ENCODE measurements at regions of chr13 and their contacts with region 1.

Region 1: GRCh38 chr13:47774671-47774994 is 226.4 kb downstream of the SUCLA2 start:
- DNase-seq: no peak
- ATAC-seq: no peak
- H3K4me3 ChIP-seq: no peak overlapping the region
- H3K4me3 Mint-ChIP-seq: no peak overlapping the region
- H3K27ac ChIP-seq: no peak overlapping the region
- H3K27ac Mint-ChIP-seq: no peak overlapping the region
- H3K4me1 ChIP-seq: no peaks in the 10 kb centered on the region
- H3K4me1 Mint-ChIP-seq: no peaks in the 10 kb centered on the region
- H3K27me3 ChIP-seq: no peaks in the 10 kb centered on the region
- H3K27me3 Mint-ChIP-seq: peaks cover 11% of the 10 kb centered on the region
- CTCF ChIP-seq: no peak

Region 2: DNA sequence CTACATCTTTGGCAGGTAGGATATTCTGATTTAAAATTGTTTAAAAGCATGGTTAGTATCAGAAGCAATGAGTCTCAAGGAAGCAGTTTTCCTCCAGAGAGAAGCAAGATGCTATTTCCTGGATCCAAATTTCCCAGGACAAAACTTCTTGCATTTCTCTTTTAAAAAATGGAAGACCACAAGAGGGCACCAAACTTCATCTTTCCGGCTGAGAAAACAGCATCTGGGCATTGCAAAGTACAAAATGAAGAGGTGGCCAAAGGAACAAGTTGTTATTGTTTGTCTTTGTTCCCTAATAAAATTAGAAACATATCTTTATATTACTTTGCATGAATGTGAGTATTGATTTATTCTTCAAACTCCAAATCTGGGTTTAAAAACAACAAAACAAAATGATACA is 1281.7 kb before region 1 on chr13:
- CTCF ChIA-PET with region 1: interaction called, 5 read pairs
- POLR2A ChIA-PET with region 1: no interaction called
- intact Hi-C with region 1: loop called in 1 of 2 experiments (anchors 1 kb)
- DNase-seq: peak in 3 of 9 experiments; percentile 8 to 53 (median 42)
- ATAC-seq: no peak
- H3K4me3 ChIP-seq: no peak overlapping the region
- H3K4me3 Mint-ChIP-seq: no peak overlapping the region
- H3K27ac ChIP-seq: no peak overlapping the region
- H3K27ac Mint-ChIP-seq: no peak overlapping the region
- H3K4me1 ChIP-seq: no peaks in the 10 kb centered on the region
- H3K4me1 Mint-ChIP-seq: no peaks in the 10 kb centered on the region
- H3K27me3 ChIP-seq: no peaks in the 10 kb centered on the region
- H3K27me3 Mint-ChIP-seq: peaks cover 3% of the 10 kb centered on the region
- CTCF ChIP-seq: peak; percentile 79

Region 3: GRCh38 chr13:46759846-46760245 is 1014.8 kb before region 1 on chr13:
- CTCF ChIA-PET with region 1: no interaction called
- POLR2A ChIA-PET with region 1: no interaction called
- intact Hi-C with region 1: loop called (anchors 10 kb)
- DNase-seq: no peak
- ATAC-seq: no peak
- H3K4me3 ChIP-seq: no peak overlapping the region
- H3K4me3 Mint-ChIP-seq: no peak overlapping the region
- H3K27ac ChIP-seq: no peak overlapping the region
- H3K27ac Mint-ChIP-seq: no peak overlapping the region
- H3K4me1 ChIP-seq: no peaks in the 10 kb centered on the region
- H3K4me1 Mint-ChIP-seq: no peaks in the 10 kb centered on the region
- H3K27me3 ChIP-seq: peaks cover 0 to 2% of the 10 kb centered on the region in 2 experiments
- H3K27me3 Mint-ChIP-seq: no peaks in the 10 kb centered on the region
- CTCF ChIP-seq: no peak

Region 4: GRCh38 chr13:46831588-46832194 is 942.9 kb before region 1 on chr13:
- CTCF ChIA-PET with region 1: interaction called, 3 read pairs
- POLR2A ChIA-PET with region 1: no interaction called
- intact Hi-C with region 1: loop called in 1 of 2 experiments (anchors 2 kb)
- DNase-seq: peak in 4 of 9 experiments; percentile 18 to 52 (median 34)
- ATAC-seq: no peak
- H3K4me3 ChIP-seq: no peak overlapping the region
- H3K4me3 Mint-ChIP-seq: no peak overlapping the region
- H3K27ac ChIP-seq: no peak overlapping the region
- H3K27ac Mint-ChIP-seq: no peak overlapping the region
- H3K4me1 ChIP-seq: no peaks in the 10 kb centered on the region
- H3K4me1 Mint-ChIP-seq: no peaks in the 10 kb centered on the region
- H3K27me3 ChIP-seq: no peaks in the 10 kb centered on the region
- H3K27me3 Mint-ChIP-seq: no peaks in the 10 kb centered on the region
- CTCF ChIP-seq: peak; percentile 75

Region 5: GRCh38 chr13:47708386-47708785 is 66.2 kb before region 1 on chr13:
- CTCF ChIA-PET with region 1: no interaction called
- POLR2A ChIA-PET with region 1: no interaction called
- intact Hi-C with region 1: no loop called
- DNase-seq: no peak
- ATAC-seq: no peak
- H3K4me3 ChIP-seq: no peak overlapping the region
- H3K4me3 Mint-ChIP-seq: no peak overlapping the region
- H3K27ac ChIP-seq: no peak overlapping the region
- H3K27ac Mint-ChIP-seq: no peak overlapping the region
- H3K4me1 ChIP-seq: no peaks in the 10 kb centered on the region
- H3K4me1 Mint-ChIP-seq: no peaks in the 10 kb centered on the region
- H3K27me3 ChIP-seq: no peaks in the 10 kb centered on the region
- H3K27me3 Mint-ChIP-seq: peaks cover 5% of the 10 kb centered on the region
- CTCF ChIP-seq: no peak

Region 6: GRCh38 chr13:47723898-47724297 is 50.7 kb before region 1 on chr13:
- CTCF ChIA-PET with region 1: no interaction called
- POLR2A ChIA-PET with region 1: no interaction called
- intact Hi-C with region 1: no loop called
- DNase-seq: no peak
- ATAC-seq: no peak
- H3K4me3 ChIP-seq: no peak overlapping the region
- H3K4me3 Mint-ChIP-seq: no peak overlapping the region
- H3K27ac ChIP-seq: no peak overlapping the region
- H3K27ac Mint-ChIP-seq: no peak overlapping the region
- H3K4me1 ChIP-seq: no peaks in the 10 kb centered on the region
- H3K4me1 Mint-ChIP-seq: no peaks in the 10 kb centered on the region
- H3K27me3 ChIP-seq: no peaks in the 10 kb centered on the region
- H3K27me3 Mint-ChIP-seq: no peaks in the 10 kb centered on the region
- CTCF ChIP-seq: no peak